HepG2 (cell line): ENCODE measurements at regions of chr11 and their contacts with region 1.

Region 1: DNA sequence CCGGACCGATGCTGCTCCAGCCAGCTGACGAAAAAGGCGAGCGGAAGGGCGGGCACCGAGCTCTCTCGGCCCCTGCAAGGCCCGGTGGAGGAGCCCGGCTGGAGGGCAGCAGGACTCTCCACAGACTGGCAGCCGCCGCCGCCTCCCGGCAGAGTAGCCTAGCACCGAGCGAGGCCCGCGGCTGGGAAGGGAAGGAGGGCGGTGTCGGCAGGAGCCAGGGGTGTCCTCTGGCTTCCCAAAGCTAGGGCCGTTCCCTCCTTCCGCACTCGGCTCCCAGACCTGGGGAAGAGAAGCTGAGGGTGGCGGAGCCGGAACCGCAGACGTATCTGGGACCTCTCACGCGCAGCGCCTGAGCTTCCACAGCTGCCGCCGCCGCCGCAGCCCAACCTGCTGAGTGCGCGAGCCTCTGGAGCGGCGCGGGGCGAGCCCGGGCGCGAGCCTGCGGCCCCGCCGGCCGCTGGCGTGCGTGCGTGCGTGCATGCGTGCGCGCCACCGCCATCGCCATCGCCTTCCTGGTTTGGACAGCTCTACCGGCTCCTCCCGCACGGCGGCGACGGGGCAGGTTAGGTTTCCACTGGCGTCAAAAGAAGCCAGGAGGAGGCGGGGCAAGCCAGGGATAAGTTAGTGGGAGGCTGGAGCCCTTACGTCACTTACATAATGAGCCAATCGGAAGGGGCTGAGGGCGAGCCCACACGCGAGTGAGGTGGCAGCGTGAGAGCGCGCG is at the start of gene RAB6A:
- DNase-seq: peak; percentile 98
- ATAC-seq: peak; percentile 92
- H3K4me3 ChIP-seq: peak within 1 kb of the TSS; percentile 83 to 99 (median 97)
- H3K27ac ChIP-seq: peak within 1 kb of the TSS; percentile 80
- H3K4me1 ChIP-seq: peaks cover 29% of the 10 kb centered on the region
- H3K27me3 ChIP-seq: no peaks in the 10 kb centered on the region; a peak in 1 of 5 replicates
- CTCF ChIP-seq: peak; percentile 66
- EP300 ChIP-seq: peak in 1 of 2 experiments; percentile 30; a peak in 1 of 4 replicates
- POLR2A ChIP-seq: peak; percentile 84 to 85
- RAD21 ChIP-seq: peak; percentile 87
- total RNA-seq, gene RAB6A: 74.3 and 83.3 TPM in 2 replicates

Region 2: GRCh38 chr11:73671701-73672100 is 89.1 kb before region 1 on chr11:
- CTCF ChIA-PET with region 1: no interaction called
- POLR2A ChIA-PET with region 1: no interaction called
- in situ Hi-C with region 1: no loop called
- intact Hi-C with region 1: no loop called
- DNase-seq: no peak
- ATAC-seq: peak; percentile 48
- H3K4me3 ChIP-seq: no peak overlapping the region
- H3K27ac ChIP-seq: no peak overlapping the region
- H3K4me1 ChIP-seq: no peaks in the 10 kb centered on the region
- H3K27me3 ChIP-seq: no peaks in the 10 kb centered on the region
- CTCF ChIP-seq: no peak
- EP300 ChIP-seq: no peak
- POLR2A ChIP-seq: no peak
- RAD21 ChIP-seq: no peak

Region 3: DNA sequence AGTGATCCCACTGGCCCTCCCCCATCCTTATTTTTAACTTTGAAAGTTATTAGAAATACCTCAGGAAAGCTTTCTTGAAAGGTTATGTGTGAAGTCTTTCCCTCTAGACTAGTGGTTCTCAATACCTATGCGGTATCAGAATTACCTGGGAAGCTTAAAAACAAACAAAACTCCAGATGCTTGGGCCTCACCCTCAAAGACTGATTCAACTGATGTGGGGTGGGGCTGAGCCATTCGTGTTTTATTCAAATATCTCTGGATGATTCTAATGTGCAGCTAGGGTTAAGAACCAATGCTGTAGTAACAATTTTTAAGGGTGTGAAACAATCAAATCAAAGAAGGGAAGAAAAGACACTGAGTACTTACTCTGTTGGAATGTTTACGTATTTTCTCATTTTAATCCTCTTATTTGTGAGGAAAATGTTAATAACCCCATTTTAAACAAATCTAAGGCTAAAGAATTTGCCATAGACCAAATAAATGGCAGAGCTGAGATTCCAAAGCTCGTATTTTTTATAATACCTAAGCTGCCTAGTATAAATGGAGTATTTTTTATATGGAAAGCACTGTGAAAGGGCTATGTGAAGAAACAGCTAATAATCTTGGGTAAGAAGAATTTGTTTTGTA is 66.8 kb before region 1 on chr11:
- CTCF ChIA-PET with region 1: no interaction called
- POLR2A ChIA-PET with region 1: no interaction called
- in situ Hi-C with region 1: no loop called
- intact Hi-C with region 1: no loop called
- DNase-seq: no peak
- ATAC-seq: no peak
- H3K4me3 ChIP-seq: no peak overlapping the region
- H3K27ac ChIP-seq: no peak overlapping the region
- H3K4me1 ChIP-seq: no peaks in the 10 kb centered on the region
- H3K27me3 ChIP-seq: no peaks in the 10 kb centered on the region
- CTCF ChIP-seq: no peak
- EP300 ChIP-seq: no peak
- POLR2A ChIP-seq: no peak
- RAD21 ChIP-seq: no peak

Region 4: DNA sequence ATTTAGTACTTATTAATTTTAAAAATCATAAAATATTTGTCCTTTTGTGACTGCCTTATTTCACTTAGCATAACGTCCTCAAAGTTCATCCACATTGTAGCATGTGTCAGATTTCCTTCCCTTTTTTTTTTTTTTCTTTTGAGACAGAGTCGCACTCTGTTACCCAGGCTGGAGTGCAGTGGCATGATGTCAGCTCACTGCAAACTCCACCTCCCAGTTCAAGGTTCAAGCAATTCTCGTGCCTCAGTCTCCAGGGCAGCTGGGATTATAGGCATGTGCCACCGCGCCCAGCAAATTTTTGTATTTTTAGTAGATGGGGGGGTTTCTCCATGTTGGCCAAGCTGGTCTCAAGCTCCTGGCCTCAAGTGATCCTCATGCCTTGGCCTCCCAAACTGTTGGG is 10.6 kb before region 1 on chr11:
- CTCF ChIA-PET with region 1: no interaction called
- POLR2A ChIA-PET with region 1: interaction called, 16 read pairs
- in situ Hi-C with region 1: no loop called
- intact Hi-C with region 1: no loop called
- DNase-seq: peak; percentile 42
- ATAC-seq: no peak
- H3K4me3 ChIP-seq: no peak overlapping the region
- H3K27ac ChIP-seq: peak overlapping the region; percentile 81
- H3K4me1 ChIP-seq: peaks cover 95% of the 10 kb centered on the region
- H3K27me3 ChIP-seq: no peaks in the 10 kb centered on the region
- CTCF ChIP-seq: no peak
- EP300 ChIP-seq: no peak
- POLR2A ChIP-seq: no peak
- RAD21 ChIP-seq: no peak

Region 5: DNA sequence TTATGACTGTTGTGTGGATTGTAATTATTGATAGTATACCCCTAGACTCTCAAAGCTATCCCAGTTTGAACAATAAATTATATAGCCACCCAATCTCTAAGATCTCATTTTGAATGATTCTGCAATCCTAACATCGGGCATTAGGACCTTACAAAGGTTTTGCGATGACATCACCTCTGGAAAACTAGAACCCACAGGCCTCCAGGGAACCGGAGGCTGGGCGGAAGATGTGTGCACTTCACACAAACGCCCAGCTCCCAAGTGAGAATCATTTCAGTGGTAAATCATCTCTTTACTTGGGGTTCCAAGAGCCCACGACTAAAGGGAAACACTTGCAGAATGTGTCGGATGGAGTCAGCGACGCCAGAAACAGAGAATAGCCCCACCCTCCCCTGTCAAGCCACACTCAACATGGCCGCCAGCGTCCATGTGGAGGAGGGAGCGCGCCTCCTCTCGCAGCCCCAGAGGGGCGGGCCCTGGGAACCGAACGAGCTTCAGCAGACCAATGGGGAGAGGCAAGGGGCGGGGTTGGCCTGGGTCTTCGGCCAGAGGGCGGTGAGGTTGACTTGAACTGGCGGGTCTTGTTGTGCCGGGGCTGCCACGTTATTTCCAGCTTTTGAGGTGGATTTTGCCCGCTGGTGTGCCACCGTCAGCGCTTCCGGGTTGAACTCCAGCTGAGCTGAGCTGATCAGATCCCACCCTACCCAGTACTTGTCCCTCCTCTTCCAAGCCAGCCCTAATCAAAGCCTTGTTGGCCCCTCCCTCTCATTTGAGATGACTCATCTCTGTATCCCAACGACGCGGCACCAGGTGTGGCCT is 18.5 kb after region 1 on chr11:
- CTCF ChIA-PET with region 1: no interaction called
- POLR2A ChIA-PET with region 1: interaction called, 194 read pairs
- in situ Hi-C with region 1: no loop called
- intact Hi-C with region 1: loop called (anchors 1 kb)
- DNase-seq: peak; percentile 98
- ATAC-seq: peak; percentile 97
- H3K4me3 ChIP-seq: peak overlapping the region; percentile 49 to 71 (median 65)
- H3K27ac ChIP-seq: peak overlapping the region; percentile 93
- H3K4me1 ChIP-seq: peaks cover 43% of the 10 kb centered on the region
- H3K27me3 ChIP-seq: no peaks in the 10 kb centered on the region
- CTCF ChIP-seq: peak; percentile 28; the same call in 1 of the 2 replicates
- EP300 ChIP-seq: peak; percentile 29 to 54; a peak in 1 of 4 replicates
- POLR2A ChIP-seq: peak; percentile 67 to 89; a peak in 3 of 4 replicates
- RAD21 ChIP-seq: peak; percentile 15; the same call in 1 of the 2 replicates

Region 6: GRCh38 chr11:73787643-73788537 is 27.0 kb after region 1 on chr11 and contains the start of gene MRPL48:
- CTCF ChIA-PET with region 1: no interaction called
- POLR2A ChIA-PET with region 1: interaction called, 36 read pairs
- in situ Hi-C with region 1: no loop called
- intact Hi-C with region 1: no loop called
- DNase-seq: peak; percentile 82
- ATAC-seq: peak; percentile 97
- H3K4me3 ChIP-seq: peak within 1 kb of the TSS; percentile 74 to 96 (median 85)
- H3K27ac ChIP-seq: peak within 1 kb of the TSS; percentile 99
- H3K4me1 ChIP-seq: peaks cover 59% of the 10 kb centered on the region
- H3K27me3 ChIP-seq: no peaks in the 10 kb centered on the region
- CTCF ChIP-seq: no peak
- EP300 ChIP-seq: no peak; a peak in 1 of 4 replicates
- POLR2A ChIP-seq: peak; percentile 82 to 83
- RAD21 ChIP-seq: peak; percentile 52; the same call in 1 of the 2 replicates
- total RNA-seq, gene MRPL48: 67.9 and 97.3 TPM in 2 replicates

Region 7: DNA sequence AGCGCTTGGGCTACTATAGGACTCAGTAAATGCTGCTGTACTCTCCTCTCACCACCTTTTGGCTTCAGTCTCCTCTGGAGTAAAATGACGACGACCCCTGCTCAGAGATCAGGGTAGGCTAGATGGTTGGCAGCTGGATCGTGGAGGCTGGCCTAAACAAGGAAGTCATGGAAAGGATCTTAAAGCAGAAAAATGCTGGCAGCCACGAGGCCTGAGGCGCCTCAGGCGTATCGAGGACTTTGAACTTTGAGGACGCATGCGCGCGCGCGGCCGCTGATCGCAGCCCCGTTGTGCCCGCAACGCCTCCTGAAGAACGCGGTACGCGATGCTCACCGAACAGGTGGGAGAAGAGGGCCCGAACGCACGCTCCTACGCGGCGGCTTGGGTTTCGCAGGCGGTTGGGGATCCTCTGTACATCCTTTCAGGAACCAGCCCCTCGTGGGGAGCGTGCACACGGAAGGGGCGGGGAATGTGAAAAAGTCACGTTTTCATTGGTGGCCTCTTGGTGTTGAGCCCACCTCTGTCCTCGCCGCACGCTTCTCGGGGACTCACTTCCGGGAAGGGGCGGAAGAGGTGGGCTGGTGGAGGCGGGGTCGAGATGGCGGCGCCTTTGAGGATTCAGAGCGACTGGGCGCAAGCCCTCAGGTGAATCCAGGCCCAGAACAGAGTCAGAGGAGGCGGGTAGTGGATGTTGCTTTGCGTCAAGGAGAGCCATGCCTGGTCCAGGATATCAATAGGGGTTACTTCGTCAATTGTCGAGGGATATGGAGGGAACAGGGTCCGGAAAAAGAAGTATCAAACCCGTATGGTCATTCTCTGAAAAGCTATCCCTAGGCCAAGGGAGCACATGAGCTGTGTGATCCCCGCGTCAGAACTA is 115.8 kb after region 1 on chr11 and contains the starts of genes COA4 and PAAF1:
- CTCF ChIA-PET with region 1: no interaction called
- POLR2A ChIA-PET with region 1: interaction called, 4 read pairs
- in situ Hi-C with region 1: no loop called
- intact Hi-C with region 1: loop called (anchors 2 kb)
- DNase-seq: peak; percentile 98
- ATAC-seq: peak; percentile 96
- H3K4me3 ChIP-seq: peak within 1 kb of the TSS; percentile 70 to 88 (median 82)
- H3K27ac ChIP-seq: peak within 1 kb of the TSS; percentile 98
- H3K4me1 ChIP-seq: peaks cover 53% of the 10 kb centered on the region
- H3K27me3 ChIP-seq: no peaks in the 10 kb centered on the region; a peak in 1 of 5 replicates
- CTCF ChIP-seq: peak; percentile 9; the same call in 1 of the 2 replicates
- EP300 ChIP-seq: peak in 1 of 2 experiments; percentile 5; a peak in 2 of 4 replicates
- POLR2A ChIP-seq: peak; percentile 92
- RAD21 ChIP-seq: peak; percentile 12; the same call in 1 of the 2 replicates
- total RNA-seq, gene COA4: 107 and 115 TPM in 2 replicates
- total RNA-seq, gene PAAF1: 28.8 and 46.4 TPM in 2 replicates